ENCODE measurements at regions of chr21 and their contacts with region 1.

Region 1: GRCh38 chr21:25801217-25802014 is 66.6 kb downstream of the GABPA start:
- DNase-seq: peak; percentile 92
- ATAC-seq: peak; percentile 100
- H3K4me3 Mint-ChIP-seq: no peak overlapping the region
- H3K27ac Mint-ChIP-seq: no peak overlapping the region
- H3K4me1 Mint-ChIP-seq: peaks cover 7% of the 10 kb centered on the region
- H3K27me3 Mint-ChIP-seq: peaks cover 37% of the 10 kb centered on the region

Region 2: GRCh38 chr21:25790122-25790877 is 11.1 kb before region 1 on chr21:
- CTCF ChIA-PET with region 1: interaction called, 22 read pairs
- DNase-seq: no peak
- ATAC-seq: peak; percentile 36
- H3K4me3 Mint-ChIP-seq: peak overlapping the region; percentile 53
- H3K27ac Mint-ChIP-seq: peak overlapping the region; percentile 26
- H3K4me1 Mint-ChIP-seq: peaks cover 12% of the 10 kb centered on the region
- H3K27me3 Mint-ChIP-seq: peaks cover 21% of the 10 kb centered on the region

Region 3: DNA sequence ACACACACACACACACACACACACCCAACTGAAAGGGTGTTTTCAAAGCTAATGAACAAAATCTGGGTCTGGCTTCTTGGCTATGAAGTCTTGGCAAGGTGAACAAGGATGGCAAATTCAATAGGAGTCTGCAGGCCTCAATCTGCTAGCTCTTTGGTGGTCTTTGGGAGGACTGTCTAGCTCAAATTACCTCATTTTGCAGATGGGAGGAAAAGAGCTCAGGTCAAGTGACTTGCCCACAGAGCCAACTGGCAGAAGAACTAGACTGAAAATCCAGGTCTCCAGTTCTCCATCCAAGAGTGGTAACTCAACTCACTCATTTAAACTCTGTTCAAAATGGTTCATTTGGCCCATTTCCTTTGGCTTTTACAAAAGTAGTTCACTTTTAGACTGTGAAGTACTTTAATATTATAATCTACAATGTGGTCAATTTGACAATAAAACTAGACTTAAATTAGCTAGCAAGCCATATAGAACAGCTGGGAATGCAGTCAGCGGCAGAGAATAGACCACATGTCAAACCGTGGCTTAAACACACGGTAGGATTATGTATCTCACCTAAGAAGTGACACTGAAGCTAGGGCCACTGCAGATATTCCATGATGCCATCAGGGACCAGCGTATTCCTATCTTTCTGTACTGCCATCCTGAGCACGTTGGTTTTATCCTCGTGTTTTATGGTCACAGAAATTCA is 256.2 kb after region 1 on chr21:
- CTCF ChIA-PET with region 1: no interaction called
- DNase-seq: no peak
- ATAC-seq: no peak
- H3K4me3 Mint-ChIP-seq: no peak overlapping the region
- H3K27ac Mint-ChIP-seq: no peak overlapping the region
- H3K4me1 Mint-ChIP-seq: no peaks in the 10 kb centered on the region
- H3K27me3 Mint-ChIP-seq: no peaks in the 10 kb centered on the region

Measured in activated CD8-positive, alpha-beta memory T cell treated with anti-CD3 and anti-CD28 coated beads, Interleukin-2, amount 10 ng/mL, durations not matched to agents 7 days and 5 days (primary cell).